Gastrocnemius medialis (tissue), 4 donors: ENCODE measurements at regions of chr15 and their contacts with region 1.

Region 1: DNA sequence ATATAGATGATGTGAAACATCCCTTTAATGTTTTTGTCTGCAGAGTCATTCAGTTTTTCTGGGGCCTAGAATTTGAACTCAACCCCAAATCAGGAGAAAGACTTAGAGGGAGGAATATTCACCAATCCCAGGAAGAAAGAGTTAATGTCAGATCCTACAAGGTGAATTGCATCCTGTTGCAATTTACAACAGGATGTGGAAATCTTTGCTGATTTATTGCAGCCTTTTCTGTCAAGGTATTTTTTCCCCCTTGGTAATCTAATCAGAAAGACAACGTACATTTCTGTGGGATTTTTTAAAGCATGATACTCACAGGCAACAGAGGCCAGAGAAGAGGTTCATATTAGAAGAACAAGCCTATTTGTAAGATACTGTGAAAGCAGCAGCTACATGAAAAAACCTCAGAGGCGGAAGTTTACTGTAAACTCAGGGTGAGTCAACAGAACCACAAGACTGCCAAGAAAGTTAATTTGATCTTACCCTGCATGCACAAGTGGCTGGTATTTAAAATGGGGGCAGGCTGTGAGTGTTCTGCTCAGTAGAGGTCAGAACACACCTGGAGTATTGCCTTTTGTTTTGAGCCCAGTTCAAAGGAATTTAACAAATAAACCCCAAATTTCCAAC is 531.9 kb downstream of the AGBL1 start:
- DNase-seq: peak; percentile 60 to 63
- ATAC-seq: peak; percentile 99
- H3K4me3 ChIP-seq: no peak overlapping the region
- H3K27ac ChIP-seq: peak overlapping the region; percentile 20 to 78 (median 68)
- H3K4me1 ChIP-seq: peaks cover 23 to 36% of the 10 kb centered on the region in 2 donors
- H3K27me3 ChIP-seq: no peaks in the 10 kb centered on the region
- CTCF ChIP-seq: no peak
- POLR2A ChIP-seq: no peak

Region 2: DNA sequence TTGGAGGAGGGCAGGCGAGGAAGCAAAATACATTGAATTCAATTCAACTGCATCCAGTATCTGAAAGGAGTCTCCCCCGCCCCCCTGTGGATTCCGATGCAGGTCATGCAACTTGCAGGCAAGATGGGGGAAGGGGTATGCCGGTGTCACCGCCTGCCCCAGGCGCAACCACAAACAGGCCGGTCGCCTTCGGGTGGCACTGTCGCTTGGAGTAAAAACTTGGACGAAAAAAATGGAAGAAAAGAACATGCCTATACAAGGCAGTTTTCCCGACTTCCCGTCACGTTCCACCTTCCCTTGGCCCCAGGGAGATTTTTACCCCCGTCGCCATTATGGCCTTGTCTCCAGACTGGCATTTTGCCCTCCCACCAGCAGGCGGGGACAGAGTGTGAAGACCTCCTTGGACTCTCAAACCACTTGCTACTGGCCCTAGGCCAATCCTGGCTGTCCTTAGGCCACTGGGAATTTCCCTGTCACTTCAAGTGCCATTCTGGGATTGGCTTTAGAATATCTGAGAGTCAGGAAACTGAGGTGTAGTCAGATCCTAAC is 1646.6 kb after region 1 on chr15:
- in situ Hi-C with region 1: loop called in 1 of 4 experiments (anchors 25 kb)
- intact Hi-C with region 1: loop called (anchors 5 kb)
- DNase-seq: no peak
- ATAC-seq: no peak
- H3K4me3 ChIP-seq: peak overlapping the region in 3 of 4 donors; percentile 44 to 58 (median 54)
- H3K27ac ChIP-seq: no peak overlapping the region
- H3K4me1 ChIP-seq: peaks cover 11 to 12% of the 10 kb centered on the region in 2 donors
- H3K27me3 ChIP-seq: peaks cover 38 to 47% (median 40%) of the 10 kb centered on the region in 3 donors
- CTCF ChIP-seq: no peak
- POLR2A ChIP-seq: no peak